GM12878 (cell line): ENCODE measurements at regions of chr10 and their contacts with region 1.

Region 1: GRCh38 chr10:34723750-34724149 is 91.3 kb downstream of the PARD3 start:
- DNase-seq: no peak
- ATAC-seq: peak; percentile 77
- H3K4me3 ChIP-seq: no peak overlapping the region
- H3K27ac ChIP-seq: no peak overlapping the region
- H3K4me1 ChIP-seq: no peaks in the 10 kb centered on the region
- H3K27me3 ChIP-seq: no peaks in the 10 kb centered on the region
- CTCF ChIP-seq: peak; percentile 39 to 70 (median 39); a peak in 4 of 6 replicates
- EP300 ChIP-seq: no peak
- POLR2A ChIP-seq: no peak
- RAD21 ChIP-seq: peak; percentile 71

Region 2: DNA sequence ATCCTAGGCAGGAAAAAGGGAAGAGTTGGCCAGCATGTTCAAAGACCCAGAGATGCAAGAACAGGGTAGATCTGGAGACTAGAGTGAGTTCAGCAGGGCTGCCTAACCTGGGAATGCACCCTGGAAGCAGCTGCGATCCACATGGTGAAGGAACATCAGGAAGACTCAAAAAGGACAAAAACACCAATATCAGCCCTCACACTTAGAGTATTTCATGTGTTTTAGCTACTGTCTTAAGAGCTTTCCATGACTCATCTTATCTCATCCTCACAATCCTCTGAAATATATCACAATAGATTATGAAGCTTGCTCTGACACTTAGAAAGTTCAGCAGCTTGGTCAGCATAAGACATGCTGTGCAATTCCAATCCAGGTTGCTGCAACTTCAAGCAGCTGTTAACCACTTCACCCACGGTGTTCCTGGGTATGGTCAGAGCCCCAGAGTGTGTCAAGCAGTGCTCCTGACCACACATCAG is 289.6 kb before region 1 on chr10:
- CTCF ChIA-PET with region 1: no interaction called
- POLR2A ChIA-PET with region 1: no interaction called
- RAD21 ChIA-PET with region 1: no interaction called
- SMC1A ChIA-PET with region 1: no interaction called
- in situ Hi-C with region 1: no loop called
- intact Hi-C with region 1: no loop called
- DNase-seq: no peak
- ATAC-seq: peak; percentile 35
- H3K4me3 ChIP-seq: no peak overlapping the region
- H3K27ac ChIP-seq: no peak overlapping the region
- H3K4me1 ChIP-seq: no peaks in the 10 kb centered on the region
- H3K27me3 ChIP-seq: no peaks in the 10 kb centered on the region
- CTCF ChIP-seq: no peak
- EP300 ChIP-seq: no peak
- POLR2A ChIP-seq: no peak
- RAD21 ChIP-seq: no peak

Region 3: GRCh38 chr10:34587002-34587679 is 136.6 kb before region 1 on chr10:
- CTCF ChIA-PET with region 1: no interaction called
- POLR2A ChIA-PET with region 1: no interaction called
- RAD21 ChIA-PET with region 1: no interaction called
- SMC1A ChIA-PET with region 1: no interaction called
- in situ Hi-C with region 1: no loop called
- intact Hi-C with region 1: no loop called
- DNase-seq: no peak
- ATAC-seq: no peak
- H3K4me3 ChIP-seq: no peak overlapping the region
- H3K27ac ChIP-seq: no peak overlapping the region
- H3K4me1 ChIP-seq: no peaks in the 10 kb centered on the region
- H3K27me3 ChIP-seq: no peaks in the 10 kb centered on the region
- CTCF ChIP-seq: no peak
- EP300 ChIP-seq: no peak
- POLR2A ChIP-seq: no peak
- RAD21 ChIP-seq: no peak

Region 4: GRCh38 chr10:34677591-34677990 is 46.2 kb before region 1 on chr10:
- CTCF ChIA-PET with region 1: interaction called, 15 read pairs
- POLR2A ChIA-PET with region 1: interaction called, 6 read pairs
- RAD21 ChIA-PET with region 1: interaction called, 20 read pairs
- SMC1A ChIA-PET with region 1: interaction called, 12 read pairs
- in situ Hi-C with region 1: no loop called
- intact Hi-C with region 1: no loop called
- DNase-seq: no peak
- ATAC-seq: no peak
- H3K4me3 ChIP-seq: no peak overlapping the region
- H3K27ac ChIP-seq: no peak overlapping the region
- H3K4me1 ChIP-seq: no peaks in the 10 kb centered on the region
- H3K27me3 ChIP-seq: no peaks in the 10 kb centered on the region
- CTCF ChIP-seq: 0 out of 6 replicates have a peak, but pooled peaks of 1 of the 3 experiments have one; percentile 4
- EP300 ChIP-seq: no peak
- POLR2A ChIP-seq: no peak
- RAD21 ChIP-seq: no peak

Region 5: DNA sequence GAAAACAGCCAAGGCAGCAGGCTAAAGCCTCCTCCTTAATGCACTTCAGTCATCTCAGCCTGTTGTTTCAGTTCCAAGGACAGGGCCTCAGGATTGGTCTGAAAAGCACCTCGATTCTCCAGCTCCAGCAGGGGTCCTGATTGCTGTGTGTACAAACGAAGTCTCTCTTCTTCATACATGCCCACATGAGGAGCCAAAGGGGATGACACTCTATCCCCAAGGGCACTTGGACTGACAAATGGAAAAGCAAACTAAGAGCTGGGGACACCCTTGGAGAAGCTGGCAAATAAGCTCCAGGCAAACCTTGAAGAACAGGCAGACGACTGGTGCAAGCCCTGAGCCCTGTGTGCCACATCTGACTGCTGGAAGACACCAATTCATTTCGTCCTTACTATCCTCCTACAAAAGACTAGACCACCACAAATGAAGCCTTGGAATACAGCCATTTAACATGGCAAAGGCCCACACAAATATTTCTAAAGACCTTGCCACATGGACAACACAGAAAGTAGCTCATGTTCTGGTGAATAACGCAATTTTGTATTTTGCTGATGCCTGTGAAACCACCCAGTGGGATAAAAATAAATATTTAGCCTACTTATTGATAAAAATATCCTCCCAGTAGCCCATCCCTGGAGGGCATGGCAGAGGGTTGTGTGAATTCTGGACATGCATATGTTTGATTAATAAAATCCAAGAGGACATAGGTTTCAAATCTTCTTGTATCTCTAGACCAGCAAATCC is 29.4 kb after region 1 on chr10:
- CTCF ChIA-PET with region 1: interaction called, 30 read pairs
- POLR2A ChIA-PET with region 1: interaction called, 13 read pairs
- RAD21 ChIA-PET with region 1: interaction called, 48 read pairs
- SMC1A ChIA-PET with region 1: interaction called, 52 read pairs
- in situ Hi-C with region 1: no loop called
- intact Hi-C with region 1: no loop called
- DNase-seq: no peak
- ATAC-seq: no peak
- H3K4me3 ChIP-seq: no peak overlapping the region
- H3K27ac ChIP-seq: no peak overlapping the region
- H3K4me1 ChIP-seq: no peaks in the 10 kb centered on the region
- H3K27me3 ChIP-seq: no peaks in the 10 kb centered on the region; a peak in 2 of 4 replicates
- CTCF ChIP-seq: no peak
- EP300 ChIP-seq: no peak
- POLR2A ChIP-seq: no peak
- RAD21 ChIP-seq: no peak

Region 6: GRCh38 chr10:34789966-34790506 is 66.3 kb after region 1 on chr10:
- CTCF ChIA-PET with region 1: interaction called, 26 read pairs
- POLR2A ChIA-PET with region 1: interaction called, 5 read pairs
- RAD21 ChIA-PET with region 1: interaction called, 15 read pairs
- SMC1A ChIA-PET with region 1: interaction called, 30 read pairs
- in situ Hi-C with region 1: no loop called
- intact Hi-C with region 1: no loop called
- DNase-seq: no peak
- ATAC-seq: peak; percentile 64
- H3K4me3 ChIP-seq: no peak overlapping the region
- H3K27ac ChIP-seq: no peak overlapping the region
- H3K4me1 ChIP-seq: no peaks in the 10 kb centered on the region
- H3K27me3 ChIP-seq: no peaks in the 10 kb centered on the region
- CTCF ChIP-seq: no peak
- EP300 ChIP-seq: no peak
- POLR2A ChIP-seq: no peak
- RAD21 ChIP-seq: no peak

Region 7: DNA sequence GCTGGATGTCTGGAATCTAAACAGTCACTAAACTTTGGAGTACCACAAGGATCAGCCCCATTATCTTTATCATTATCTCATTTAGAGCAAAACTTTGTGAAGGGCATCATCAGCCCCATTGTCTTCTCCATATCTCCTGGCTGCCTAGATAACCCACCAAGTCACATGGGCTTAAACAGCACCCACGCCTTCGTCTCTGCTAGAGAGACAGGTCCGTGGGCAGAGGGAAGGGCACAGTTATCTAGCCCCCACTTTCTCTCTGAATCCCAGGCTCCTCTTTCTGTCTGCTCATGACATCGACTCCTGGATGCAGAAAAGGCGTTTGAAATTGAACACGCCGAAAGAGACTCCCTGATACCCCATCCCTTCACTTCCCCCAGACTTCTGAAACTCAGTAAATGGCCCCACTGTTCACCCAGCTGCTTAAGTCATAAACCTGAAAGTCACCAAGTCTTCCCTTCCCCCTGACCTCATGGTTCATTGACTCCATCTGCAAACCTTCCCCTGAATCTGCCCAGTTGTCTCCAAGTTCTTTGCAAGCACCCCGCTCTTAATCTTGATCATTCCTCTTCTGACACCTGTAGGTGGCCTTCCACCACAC is 112.3 kb after region 1 on chr10:
- CTCF ChIA-PET with region 1: interaction called, 12 read pairs
- POLR2A ChIA-PET with region 1: interaction called, 3 read pairs
- RAD21 ChIA-PET with region 1: interaction called, 31 read pairs
- SMC1A ChIA-PET with region 1: interaction called, 40 read pairs
- in situ Hi-C with region 1: no loop called
- intact Hi-C with region 1: no loop called
- DNase-seq: peak; percentile 59
- ATAC-seq: peak; percentile 85
- H3K4me3 ChIP-seq: no peak overlapping the region
- H3K27ac ChIP-seq: no peak overlapping the region
- H3K4me1 ChIP-seq: peaks cover 5% of the 10 kb centered on the region; the same call in 1 of the 2 replicates
- H3K27me3 ChIP-seq: no peaks in the 10 kb centered on the region
- CTCF ChIP-seq: peak in 2 of 3 experiments; percentile 16 to 21; a peak in 2 of 6 replicates
- EP300 ChIP-seq: no peak
- POLR2A ChIP-seq: no peak
- RAD21 ChIP-seq: peak; percentile 36; the same call in 1 of the 2 replicates

Region 8: GRCh38 chr10:34967335-34967880 is 243.7 kb after region 1 on chr10:
- CTCF ChIA-PET with region 1: interaction called, 29 read pairs
- POLR2A ChIA-PET with region 1: no interaction called
- RAD21 ChIA-PET with region 1: interaction called, 15 read pairs
- SMC1A ChIA-PET with region 1: interaction called, 9 read pairs
- in situ Hi-C with region 1: no loop called
- intact Hi-C with region 1: no loop called
- DNase-seq: no peak
- ATAC-seq: no peak
- H3K4me3 ChIP-seq: no peak overlapping the region
- H3K27ac ChIP-seq: no peak overlapping the region
- H3K4me1 ChIP-seq: no peaks in the 10 kb centered on the region
- H3K27me3 ChIP-seq: no peaks in the 10 kb centered on the region; a peak in 1 of 4 replicates
- CTCF ChIP-seq: no peak
- EP300 ChIP-seq: no peak
- POLR2A ChIP-seq: no peak
- RAD21 ChIP-seq: no peak